Vagina (tissue), 2 donors: ENCODE measurements at regions of chr3 and their contacts with region 1.

Region 1: GRCh38 chr3:129606636-129607390 is at the start of gene PLXND1:
- DNase-seq: no peak
- H3K4me3 ChIP-seq: peak within 1 kb of the TSS; percentile 68 to 80
- H3K27ac ChIP-seq: peak within 1 kb of the TSS; percentile 94
- H3K4me1 ChIP-seq: peaks cover 60% of the 10 kb centered on the region
- H3K27me3 ChIP-seq: no peaks in the 10 kb centered on the region
- CTCF ChIP-seq: no peak
- POLR2A ChIP-seq: peak in 1 of 2 donors; percentile 89
- total RNA-seq, gene PLXND1: 96.5 TPM

Region 2: DNA sequence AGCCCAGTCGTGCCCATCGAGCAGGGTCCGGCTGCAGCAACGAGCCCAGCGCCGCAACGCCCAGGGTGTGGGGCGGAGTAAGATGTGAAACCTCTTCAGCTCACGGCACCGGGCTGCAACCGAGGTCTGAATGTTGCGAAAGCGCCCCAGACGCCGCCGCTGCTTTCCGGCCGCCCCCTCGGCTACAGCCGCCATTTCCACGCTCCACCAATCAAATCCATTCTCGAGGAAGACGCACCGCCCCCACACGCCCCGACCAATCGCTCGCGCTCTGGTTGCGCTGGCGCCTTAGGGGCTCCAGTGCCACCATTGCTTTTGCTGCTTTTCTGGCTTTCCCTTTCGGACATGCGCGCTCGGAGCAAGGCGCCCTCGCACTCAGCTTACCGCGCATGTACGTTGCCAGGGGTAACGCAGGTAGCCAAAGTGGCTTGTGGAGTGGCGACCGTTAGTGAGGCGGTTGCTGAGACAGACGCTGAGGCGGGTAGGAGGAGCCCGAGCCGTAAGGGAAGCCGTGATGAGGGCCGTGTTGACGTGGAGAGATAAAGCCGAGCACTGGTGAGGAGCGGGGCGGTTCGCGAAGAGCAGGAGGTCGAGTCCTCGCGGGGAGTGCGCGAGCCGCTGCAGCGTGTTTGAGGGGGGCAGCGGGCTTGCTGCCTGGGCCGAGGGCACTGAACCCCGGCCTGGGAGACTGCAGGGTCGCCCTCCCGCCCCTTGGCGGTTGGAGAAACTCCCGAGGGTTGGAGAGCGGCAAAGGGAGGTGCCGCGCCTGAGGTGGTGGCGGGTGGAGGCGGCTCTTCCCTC is 166.8 kb before region 1 on chr3 and contains the starts of genes IFT122 and MBD4:
- intact Hi-C with region 1: loop called (anchors 5 kb)
- DNase-seq: peak in 1 of 2 donors; percentile 99
- H3K4me3 ChIP-seq: peak within 1 kb of the TSS; percentile 90 to 92
- H3K27ac ChIP-seq: peak within 1 kb of the TSS; percentile 94
- H3K4me1 ChIP-seq: peaks cover 73% of the 10 kb centered on the region
- H3K27me3 ChIP-seq: no peaks in the 10 kb centered on the region
- CTCF ChIP-seq: peak in 1 of 3 experiments; percentile 24
- POLR2A ChIP-seq: peak in 1 of 2 donors; percentile 80
- total RNA-seq, gene IFT122: 33.4 TPM
- total RNA-seq, gene MBD4: 32.4 TPM

Region 3: GRCh38 chr3:129560901-129561594 is 45.8 kb before region 1 on chr3:
- intact Hi-C with region 1: loop called (anchors 2 kb)
- DNase-seq: no peak
- H3K4me3 ChIP-seq: peak overlapping the region in 1 of 2 donors; percentile 8
- H3K27ac ChIP-seq: peak overlapping the region; percentile 85
- H3K4me1 ChIP-seq: peaks cover 99% of the 10 kb centered on the region
- H3K27me3 ChIP-seq: no peaks in the 10 kb centered on the region
- CTCF ChIP-seq: no peak
- POLR2A ChIP-seq: no peak

Region 4: DNA sequence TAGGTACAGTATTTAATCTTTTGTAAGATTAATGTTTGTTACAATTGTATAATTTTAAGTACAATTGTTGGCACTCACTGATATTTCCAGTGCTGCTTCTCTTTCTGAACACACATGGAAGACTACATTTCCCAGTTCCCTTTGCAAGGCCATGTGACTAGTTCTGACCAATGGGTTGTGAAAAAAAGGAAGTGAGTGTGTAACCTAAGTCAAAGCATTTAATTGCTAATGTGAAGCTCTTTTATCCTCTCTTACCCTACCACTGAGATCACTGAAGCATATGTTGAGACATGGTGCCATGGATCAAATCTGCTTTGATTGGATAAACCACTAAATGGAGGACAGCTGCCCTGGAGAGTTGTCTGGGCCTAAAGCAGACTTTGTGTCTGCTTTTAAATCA is 83.6 kb after region 1 on chr3:
- intact Hi-C with region 1: no loop called
- DNase-seq: no peak
- H3K4me3 ChIP-seq: no peak overlapping the region
- H3K27ac ChIP-seq: no peak overlapping the region
- H3K4me1 ChIP-seq: peaks cover 20% of the 10 kb centered on the region
- H3K27me3 ChIP-seq: no peaks in the 10 kb centered on the region
- CTCF ChIP-seq: no peak
- POLR2A ChIP-seq: no peak

Region 5: DNA sequence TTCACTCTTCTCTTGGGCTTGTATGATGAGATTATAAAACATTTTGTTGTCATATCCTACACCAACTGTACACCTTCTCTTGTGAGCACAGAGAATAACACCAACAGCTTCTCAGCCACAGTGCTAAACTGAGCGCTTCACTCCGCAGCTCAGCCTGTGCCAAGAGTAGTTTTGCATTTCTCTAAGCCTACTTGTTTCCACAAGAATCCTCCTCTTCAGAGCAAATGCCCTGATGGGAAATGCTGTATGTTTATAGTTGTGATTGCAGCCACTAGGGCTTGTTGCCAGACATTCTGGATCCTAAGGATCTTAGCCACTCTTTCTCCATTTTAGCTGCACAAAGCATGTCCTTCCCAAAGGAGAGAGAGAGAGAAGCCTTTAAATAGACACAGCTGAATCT is 138.4 kb after region 1 on chr3:
- intact Hi-C with region 1: no loop called
- DNase-seq: no peak
- H3K4me3 ChIP-seq: no peak overlapping the region
- H3K27ac ChIP-seq: no peak overlapping the region
- H3K4me1 ChIP-seq: no peaks in the 10 kb centered on the region
- H3K27me3 ChIP-seq: no peaks in the 10 kb centered on the region
- CTCF ChIP-seq: no peak
- POLR2A ChIP-seq: no peak